Activated CD8-positive, alpha-beta memory T cell treated with anti-CD3 and anti-CD28 coated beads, Interleukin-2, amount 10 ng/mL, durations not matched to agents 7 days and 5 days (primary cell): ENCODE measurements at regions of chr17 and their contacts with region 1.

Region 1: GRCh38 chr17:64020056-64020766 is at the start of gene ICAM2:
- DNase-seq: peak; percentile 97
- ATAC-seq: peak; percentile 75
- H3K4me3 Mint-ChIP-seq: peak within 1 kb of the TSS; percentile 92
- H3K27ac Mint-ChIP-seq: peak within 1 kb of the TSS; percentile 98
- H3K4me1 Mint-ChIP-seq: peaks cover 73% of the 10 kb centered on the region
- H3K27me3 Mint-ChIP-seq: no peaks in the 10 kb centered on the region
- total RNA-seq, gene ICAM2: 39.0 to 40.6 TPM

Region 2: GRCh38 chr17:63984651-63985386 is 35.4 kb before region 1 on chr17:
- CTCF ChIA-PET with region 1: interaction called, 126 read pairs
- DNase-seq: peak; percentile 67
- ATAC-seq: peak; percentile 83
- H3K4me3 Mint-ChIP-seq: no peak overlapping the region
- H3K27ac Mint-ChIP-seq: peak overlapping the region; percentile 72
- H3K4me1 Mint-ChIP-seq: peaks cover 15% of the 10 kb centered on the region
- H3K27me3 Mint-ChIP-seq: no peaks in the 10 kb centered on the region

Region 3: DNA sequence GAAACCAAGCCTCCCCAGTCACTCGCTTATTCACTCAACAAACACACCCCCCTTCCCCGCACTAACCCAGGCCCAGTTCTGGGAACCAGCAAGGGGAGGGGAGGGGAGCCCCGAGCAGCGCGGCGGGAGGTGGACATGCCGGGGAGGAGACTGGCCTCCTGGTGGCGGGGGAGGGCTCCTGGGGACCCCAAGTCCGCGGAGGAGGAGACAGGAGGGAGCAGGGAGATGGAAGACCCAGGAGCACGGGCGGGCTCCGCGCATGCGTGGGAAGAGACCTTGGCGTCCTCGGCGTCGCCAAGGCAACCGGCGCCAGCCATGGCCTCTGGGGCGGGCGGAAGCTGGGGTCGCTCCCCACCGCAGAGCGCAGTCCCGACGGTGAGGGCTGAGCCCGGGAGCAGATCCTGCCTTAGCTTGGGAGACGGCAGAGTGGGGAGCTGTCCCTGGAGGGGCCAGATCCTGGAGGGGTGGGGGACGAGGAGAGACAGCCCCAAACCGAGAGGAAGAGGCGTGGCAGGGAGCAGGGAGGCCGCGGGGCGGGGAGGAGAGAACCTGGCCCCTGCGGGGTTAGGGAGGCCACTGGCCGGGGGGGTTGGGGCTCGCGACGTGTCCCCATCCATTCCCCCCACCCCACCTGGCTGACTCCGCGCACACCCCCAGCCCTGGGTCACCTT is 22.0 kb before region 1 on chr17 and contains the start of gene PRR29:
- CTCF ChIA-PET with region 1: interaction called, 126 read pairs
- DNase-seq: peak; percentile 86
- ATAC-seq: peak; percentile 84
- H3K4me3 Mint-ChIP-seq: peak within 1 kb of the TSS; percentile 87
- H3K27ac Mint-ChIP-seq: peak within 1 kb of the TSS; percentile 33
- H3K4me1 Mint-ChIP-seq: peaks cover 32% of the 10 kb centered on the region
- H3K27me3 Mint-ChIP-seq: peaks cover 4% of the 10 kb centered on the region
- total RNA-seq, gene PRR29: 1.5 to 3.3 TPM

Region 4: DNA sequence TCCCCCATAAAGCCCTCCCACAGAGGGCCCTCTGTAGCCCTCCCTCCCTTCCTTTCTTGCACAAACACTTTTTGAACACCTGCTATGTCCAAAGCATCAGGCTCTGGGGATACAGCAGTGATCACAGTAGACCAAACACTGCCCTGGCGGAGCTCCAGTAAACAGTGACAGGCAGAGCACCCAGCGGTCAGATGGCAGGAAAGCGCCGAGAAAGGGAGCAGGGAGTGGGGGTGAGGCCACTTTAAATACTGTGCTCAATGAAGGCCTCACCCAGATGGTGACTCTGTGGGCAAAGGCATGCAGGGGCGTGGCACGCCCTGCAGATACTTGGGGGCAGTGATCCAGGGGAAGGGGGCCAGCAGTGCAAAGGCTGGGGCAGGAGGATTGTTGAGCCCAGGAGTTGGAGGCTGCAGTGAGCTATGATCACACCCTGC is 14.5 kb before region 1 on chr17:
- CTCF ChIA-PET with region 1: interaction called, 14 read pairs
- DNase-seq: no peak
- ATAC-seq: no peak
- H3K4me3 Mint-ChIP-seq: no peak overlapping the region
- H3K27ac Mint-ChIP-seq: no peak overlapping the region
- H3K4me1 Mint-ChIP-seq: peaks cover 19% of the 10 kb centered on the region
- H3K27me3 Mint-ChIP-seq: no peaks in the 10 kb centered on the region